ENCODE measurements at regions of chr3 and their contacts with region 1.

Region 1: GRCh38 chr3:157174649-157175498 is 14.9 kb upstream of the CCNL1 start:
- H3K4me3 Mint-ChIP-seq: peak overlapping the region; percentile 82
- H3K27ac Mint-ChIP-seq: peak overlapping the region; percentile 97
- H3K4me1 Mint-ChIP-seq: peaks cover 39% of the 10 kb centered on the region
- H3K27me3 Mint-ChIP-seq: no peaks in the 10 kb centered on the region

Region 2: DNA sequence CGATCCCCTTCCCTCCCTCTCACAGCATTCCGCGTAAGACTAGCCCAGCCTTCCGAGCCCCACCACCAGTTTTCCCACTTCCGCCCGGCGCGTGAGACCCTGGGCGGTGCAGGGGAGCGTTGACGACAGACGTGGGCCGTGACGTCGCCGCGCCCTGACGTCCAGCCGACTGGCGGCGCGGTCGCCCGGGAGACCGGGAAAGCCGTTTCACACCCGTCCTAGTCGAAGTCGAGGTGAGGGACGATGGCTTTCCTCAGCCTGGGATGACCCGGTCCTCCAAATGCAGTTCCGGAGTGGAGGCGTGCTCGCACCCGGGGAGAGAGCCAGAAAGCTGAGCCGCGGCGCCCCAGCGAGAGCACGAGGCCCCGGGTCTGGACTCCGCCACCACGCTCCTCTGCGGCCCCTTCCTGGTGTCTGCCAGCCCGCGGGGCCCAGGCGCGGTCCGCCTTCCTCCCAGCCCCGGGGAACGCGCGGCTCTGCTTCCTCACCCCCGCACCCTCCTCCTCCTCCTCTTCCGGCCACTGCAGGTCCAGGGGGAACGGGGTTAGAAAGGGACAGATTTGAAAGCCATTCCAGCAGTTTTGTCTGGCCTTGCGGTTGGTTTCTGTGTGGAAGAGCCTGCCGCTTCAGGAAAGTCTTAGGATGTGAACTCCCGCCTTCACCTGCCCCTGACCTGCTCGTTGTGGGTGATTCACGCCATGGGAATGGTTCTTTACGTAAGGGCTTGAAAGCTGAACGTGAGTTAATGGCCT is 348.6 kb before region 1 on chr3 and contains the start of gene LEKR1:
- intact Hi-C with region 1: loop called (anchors 2 kb)
- H3K4me3 Mint-ChIP-seq: peak within 1 kb of the TSS; percentile 83
- H3K27ac Mint-ChIP-seq: peak within 1 kb of the TSS; percentile 97
- H3K4me1 Mint-ChIP-seq: peaks cover 13% of the 10 kb centered on the region
- H3K27me3 Mint-ChIP-seq: no peaks in the 10 kb centered on the region

Region 3: DNA sequence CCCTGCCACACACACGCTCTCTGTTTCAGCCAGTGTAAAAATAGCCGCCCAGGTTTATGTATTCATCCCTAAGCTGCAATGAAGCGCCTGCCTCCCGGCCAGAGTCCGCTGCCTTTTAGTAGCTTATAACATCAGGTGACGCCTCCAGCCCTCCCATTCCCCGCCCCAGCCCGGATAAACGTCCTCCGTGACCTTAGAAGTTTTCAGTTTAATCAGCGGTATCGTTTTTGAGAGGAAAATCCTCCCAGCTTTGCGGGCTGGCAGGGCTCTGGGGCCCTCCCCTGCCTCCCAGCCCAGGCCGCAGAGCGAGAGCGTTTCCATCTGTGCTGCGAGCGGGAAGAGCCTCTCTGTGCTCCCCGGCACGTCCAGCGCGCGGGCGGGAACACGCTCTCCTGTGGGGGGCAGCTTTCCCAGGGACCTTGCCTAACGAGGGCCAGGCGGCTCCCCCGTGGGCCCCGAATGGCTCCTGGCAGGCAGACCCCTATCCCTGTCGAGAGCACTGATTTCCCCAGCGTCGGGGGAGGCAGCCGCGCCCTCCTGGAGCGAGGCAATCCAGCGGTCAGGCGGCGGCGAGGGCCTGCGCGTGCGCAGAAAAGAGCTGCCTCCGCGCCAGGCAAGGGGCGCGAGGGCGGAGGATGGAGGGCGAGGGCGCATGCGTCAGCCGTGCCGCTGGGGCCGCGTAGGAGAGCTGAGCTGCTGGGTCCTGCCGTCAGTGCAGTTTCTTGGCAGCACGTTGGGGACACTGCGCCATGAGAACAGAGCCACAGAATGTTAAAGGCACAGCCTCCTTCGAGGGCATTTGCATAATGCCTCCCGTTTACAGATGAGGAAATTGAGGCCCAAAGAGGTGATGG is 86.0 kb before region 1 on chr3:
- intact Hi-C with region 1: loop called (anchors 1 kb)
- H3K4me3 Mint-ChIP-seq: peak overlapping the region; percentile 81
- H3K27ac Mint-ChIP-seq: peak overlapping the region; percentile 96
- H3K4me1 Mint-ChIP-seq: peaks cover 30% of the 10 kb centered on the region
- H3K27me3 Mint-ChIP-seq: peaks cover 5% of the 10 kb centered on the region

Region 4: DNA sequence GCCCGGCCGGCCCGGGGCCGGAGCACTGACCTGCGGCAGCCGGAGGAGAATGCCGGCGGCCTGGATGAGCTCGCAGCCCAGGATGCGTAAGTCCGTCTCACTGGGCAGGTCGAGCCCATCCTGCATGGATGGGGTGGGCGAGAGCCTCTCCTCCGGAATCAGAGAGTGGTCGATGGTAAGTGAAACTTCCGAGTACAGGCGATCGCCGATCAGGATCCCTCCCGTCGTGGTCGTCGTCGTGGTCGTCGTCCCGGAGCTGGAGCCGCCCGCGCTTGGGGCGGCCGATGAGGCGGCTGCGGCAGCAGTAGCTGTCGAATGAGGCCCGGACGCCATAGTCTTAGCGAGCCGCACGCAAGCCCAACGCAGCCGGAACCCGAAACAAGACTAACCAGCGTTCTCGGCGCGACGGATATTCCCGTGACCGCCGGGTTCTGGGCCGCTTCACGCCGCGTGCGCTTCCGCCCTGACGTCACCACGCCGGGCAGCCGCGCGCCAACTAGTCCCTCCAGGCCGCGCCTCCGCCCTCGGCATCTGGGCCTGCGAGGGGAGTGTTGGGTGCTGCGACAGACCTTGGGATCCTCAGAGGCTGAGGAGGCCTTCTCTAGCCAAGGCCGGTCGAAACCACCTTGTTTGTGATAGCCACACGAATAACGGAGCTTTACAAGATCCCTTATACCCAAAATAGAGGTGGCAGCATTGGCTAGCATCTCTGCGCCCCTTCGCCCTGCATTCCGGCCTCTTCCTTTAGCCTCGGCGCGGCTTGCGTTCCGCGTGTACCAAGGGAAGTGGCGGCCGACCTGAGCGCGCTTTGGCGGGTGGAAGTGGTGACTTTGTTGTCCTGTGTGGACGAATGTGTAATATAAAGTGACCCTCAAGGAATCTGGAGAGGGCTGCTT is 14.9 kb before region 1 on chr3 and contains the start of gene CCNL1:
- intact Hi-C with region 1: loop called (anchors 1 kb)
- H3K4me3 Mint-ChIP-seq: peak within 1 kb of the TSS; percentile 99
- H3K27ac Mint-ChIP-seq: peak within 1 kb of the TSS; percentile 98
- H3K4me1 Mint-ChIP-seq: peaks cover 47% of the 10 kb centered on the region
- H3K27me3 Mint-ChIP-seq: no peaks in the 10 kb centered on the region

Region 5: DNA sequence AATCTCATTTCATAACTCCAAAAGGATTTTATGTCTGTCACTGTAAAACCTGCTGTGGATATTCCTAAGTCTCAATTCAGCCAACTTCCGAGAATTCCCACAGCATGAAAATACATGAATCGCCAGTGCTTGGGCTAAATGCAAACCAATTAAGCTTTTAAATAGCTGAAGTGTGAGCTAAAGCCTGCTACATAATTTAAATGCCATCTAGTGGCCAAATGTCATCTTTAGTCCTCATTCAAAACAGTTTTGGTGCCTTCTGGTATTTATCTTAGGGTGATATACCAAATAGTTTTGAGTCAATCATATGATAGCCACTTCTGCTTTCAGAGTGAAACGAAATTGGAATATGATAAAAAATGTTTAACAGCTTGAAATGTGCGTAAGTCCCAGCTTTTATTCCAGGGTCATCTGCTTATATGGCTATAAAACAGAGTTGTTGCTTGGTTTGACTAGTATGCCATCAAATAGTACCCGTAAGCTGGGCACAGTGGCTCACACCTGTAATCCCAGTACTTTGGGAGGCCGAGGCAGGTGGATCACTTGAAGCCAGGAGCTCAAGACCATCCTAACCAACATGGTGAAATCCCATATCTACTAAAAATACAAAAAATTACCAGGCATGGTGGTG is 26.9 kb after region 1 on chr3:
- intact Hi-C with region 1: loop called (anchors 1 kb)
- H3K4me3 Mint-ChIP-seq: no peak overlapping the region
- H3K27ac Mint-ChIP-seq: no peak overlapping the region
- H3K4me1 Mint-ChIP-seq: no peaks in the 10 kb centered on the region
- H3K27me3 Mint-ChIP-seq: no peaks in the 10 kb centered on the region

Measured in dendritic cell treated with granulocyte-macrophage colony-stimulating factor and Interleukin-4, amounts not matched to agents 40 ng/mL and 50 ng/mL, for 4 days (primary cell).